ENCODE measurements at regions of chr13 and their contacts with region 1.

Region 1: DNA sequence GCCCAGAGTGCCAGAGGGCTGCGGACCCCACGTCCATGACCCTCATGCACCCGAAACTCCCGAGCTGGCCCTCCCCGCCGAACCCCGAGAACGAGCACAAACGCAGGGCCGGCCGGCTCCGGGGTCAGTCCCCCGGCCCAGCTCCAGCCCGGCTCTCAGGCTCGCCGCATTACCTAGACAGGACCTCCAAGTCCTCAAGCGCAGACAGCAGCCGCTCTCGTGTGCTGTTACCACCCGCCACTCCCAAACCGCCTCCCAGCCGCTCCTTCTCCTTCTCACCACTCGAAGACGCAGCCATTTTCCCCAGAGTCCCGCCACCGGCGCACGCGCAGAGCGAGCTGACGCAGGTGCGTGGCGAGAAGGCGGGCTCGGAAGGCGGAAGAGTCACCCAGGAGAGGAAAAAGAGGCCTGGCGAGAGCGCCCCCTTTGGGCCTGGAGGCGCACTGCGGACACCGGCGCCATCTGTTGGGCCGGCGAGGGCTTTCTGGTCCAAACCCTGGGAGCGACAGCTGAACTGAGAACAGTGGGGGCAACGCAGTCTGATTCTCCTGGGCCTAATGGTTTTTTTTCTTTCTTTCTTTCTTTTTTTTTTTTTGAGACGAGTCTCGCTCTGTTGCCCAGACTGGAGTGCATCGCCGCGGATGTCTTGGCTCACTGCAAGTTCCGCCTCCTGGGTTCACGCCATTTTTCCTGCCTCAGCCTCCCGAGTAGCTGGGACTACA is at the start of gene MED4:
- DNase-seq: peak; percentile 91 to 96 (median 94)
- H3K4me3 ChIP-seq: peak within 1 kb of the TSS; percentile 83 to 95 (median 86)
- H3K4me3 Mint-ChIP-seq: peak within 1 kb of the TSS; percentile 96 to 97
- H3K27ac ChIP-seq: peak within 1 kb of the TSS; percentile 74 to 91
- H3K27ac Mint-ChIP-seq: peak within 1 kb of the TSS; percentile 89 to 99 (median 95)
- H3K4me1 ChIP-seq: peaks cover 12% of the 10 kb centered on the region in 2 donors
- H3K4me1 Mint-ChIP-seq: peaks cover 27% of the 10 kb centered on the region
- H3K27me3 ChIP-seq: no peaks in the 10 kb centered on the region
- H3K27me3 Mint-ChIP-seq: peaks cover 1 to 6% (median 2%) of the 10 kb centered on the region in 3 donors
- CTCF ChIP-seq: peak; percentile 97
- polyA plus RNA-seq, gene MED4: 28.4 to 53.8 (median 50.8) TPM

Region 2: DNA sequence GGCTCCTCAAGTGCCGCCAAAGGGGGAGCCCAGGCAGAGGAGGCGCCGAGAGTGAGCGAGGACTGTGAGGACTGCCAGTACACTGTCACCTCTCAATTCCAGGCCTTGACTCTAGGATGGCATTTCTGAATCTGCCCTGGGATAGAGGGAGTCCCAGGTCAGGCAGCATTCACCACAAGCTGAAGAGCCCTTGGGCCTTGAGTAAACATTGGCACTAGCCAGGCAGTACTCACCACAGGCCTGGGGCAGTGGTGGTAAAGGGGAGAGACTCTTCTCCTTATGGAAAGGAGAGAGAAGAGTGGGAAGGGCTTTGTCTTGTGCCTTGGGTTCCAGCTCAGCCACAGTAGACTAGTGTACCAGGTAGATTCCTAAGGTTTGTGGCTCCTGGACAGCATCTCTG is 1158.4 kb before region 1 on chr13:
- intact Hi-C with region 1: no loop called
- DNase-seq: no peak
- H3K4me3 ChIP-seq: no peak overlapping the region
- H3K4me3 Mint-ChIP-seq: no peak overlapping the region
- H3K27ac ChIP-seq: no peak overlapping the region
- H3K27ac Mint-ChIP-seq: no peak overlapping the region
- H3K4me1 ChIP-seq: no peaks in the 10 kb centered on the region
- H3K4me1 Mint-ChIP-seq: peaks cover 6% of the 10 kb centered on the region
- H3K27me3 ChIP-seq: no peaks in the 10 kb centered on the region
- H3K27me3 Mint-ChIP-seq: peaks cover 0 to 3% (median 2%) of the 10 kb centered on the region in 3 donors
- CTCF ChIP-seq: no peak

Region 3: DNA sequence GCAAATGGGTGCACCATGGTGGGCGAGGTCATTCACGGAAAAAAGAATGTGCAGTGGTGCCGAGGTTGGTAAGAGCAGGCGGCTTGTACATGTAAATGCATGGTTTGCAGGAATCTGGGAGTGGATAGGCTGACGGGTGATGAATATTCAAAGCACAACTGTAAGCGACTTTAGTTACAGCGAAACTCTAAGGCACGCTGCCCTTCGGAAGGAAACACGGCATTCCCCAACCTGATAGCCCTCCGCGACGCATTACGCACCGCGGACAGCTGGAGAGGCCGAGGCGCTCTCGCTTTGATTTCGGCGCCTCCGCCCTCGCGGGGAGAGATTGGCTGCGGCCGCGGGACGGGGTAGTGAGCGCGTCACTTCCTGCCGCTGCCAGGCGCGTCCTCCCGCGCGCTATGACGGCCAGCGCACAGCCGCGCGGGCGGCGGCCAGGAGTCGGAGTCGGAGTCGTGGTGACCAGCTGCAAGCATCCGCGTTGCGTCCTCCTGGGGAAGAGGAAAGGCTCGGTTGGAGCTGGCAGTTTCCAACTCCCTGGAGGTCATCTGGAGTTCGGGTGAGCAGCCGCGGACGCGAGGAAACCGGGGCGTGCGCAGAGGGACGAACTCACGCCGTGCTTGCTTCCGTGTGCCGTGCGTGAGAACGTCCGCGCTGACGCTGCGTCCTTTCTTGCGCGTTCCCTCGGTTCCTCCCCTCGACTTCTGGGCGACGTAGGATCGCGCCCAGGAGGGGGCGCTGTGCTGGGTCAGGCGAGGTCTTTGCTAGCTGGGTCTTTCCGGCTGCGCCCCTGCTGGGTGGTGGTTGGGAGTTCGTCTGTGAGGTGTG is 57.4 kb before region 1 on chr13 and contains the start of gene NUDT15:
- intact Hi-C with region 1: loop called in 1 of 2 experiments (anchors 5 kb)
- DNase-seq: peak; percentile 92 to 97 (median 96)
- H3K4me3 ChIP-seq: peak within 1 kb of the TSS; percentile 45 to 78 (median 64)
- H3K4me3 Mint-ChIP-seq: peak within 1 kb of the TSS; percentile 84 to 94
- H3K27ac ChIP-seq: peak within 1 kb of the TSS; percentile 94 to 96
- H3K27ac Mint-ChIP-seq: peak within 1 kb of the TSS; percentile 97 to 99 (median 99)
- H3K4me1 ChIP-seq: peaks cover 16 to 17% of the 10 kb centered on the region in 2 donors
- H3K4me1 Mint-ChIP-seq: peaks cover 24% of the 10 kb centered on the region
- H3K27me3 ChIP-seq: no peaks in the 10 kb centered on the region
- H3K27me3 Mint-ChIP-seq: no peaks in the 10 kb centered on the region
- CTCF ChIP-seq: peak; percentile 99
- polyA plus RNA-seq, gene NUDT15: 5.1 to 13.3 (median 12.6) TPM

Region 4: GRCh38 chr13:48448959-48449614 is 354.1 kb after region 1 on chr13:
- intact Hi-C with region 1: no loop called
- DNase-seq: peak; percentile 52 to 90 (median 68)
- H3K4me3 ChIP-seq: peak overlapping the region; percentile 25 to 70 (median 47)
- H3K4me3 Mint-ChIP-seq: peak overlapping the region; percentile 63 to 86
- H3K27ac ChIP-seq: peak overlapping the region; percentile 7 to 84
- H3K27ac Mint-ChIP-seq: peak overlapping the region; percentile 80 to 92 (median 87)
- H3K4me1 ChIP-seq: peaks cover 26 to 41% of the 10 kb centered on the region in 2 donors
- H3K4me1 Mint-ChIP-seq: peaks cover 23% of the 10 kb centered on the region
- H3K27me3 ChIP-seq: no peaks in the 10 kb centered on the region
- H3K27me3 Mint-ChIP-seq: no peaks in the 10 kb centered on the region
- CTCF ChIP-seq: no peak

Measured in CD14-positive monocyte (primary cell).